CD8-positive, alpha-beta T cell (primary cell): ENCODE measurements at regions of chr18 and their contacts with region 1.

Region 1: DNA sequence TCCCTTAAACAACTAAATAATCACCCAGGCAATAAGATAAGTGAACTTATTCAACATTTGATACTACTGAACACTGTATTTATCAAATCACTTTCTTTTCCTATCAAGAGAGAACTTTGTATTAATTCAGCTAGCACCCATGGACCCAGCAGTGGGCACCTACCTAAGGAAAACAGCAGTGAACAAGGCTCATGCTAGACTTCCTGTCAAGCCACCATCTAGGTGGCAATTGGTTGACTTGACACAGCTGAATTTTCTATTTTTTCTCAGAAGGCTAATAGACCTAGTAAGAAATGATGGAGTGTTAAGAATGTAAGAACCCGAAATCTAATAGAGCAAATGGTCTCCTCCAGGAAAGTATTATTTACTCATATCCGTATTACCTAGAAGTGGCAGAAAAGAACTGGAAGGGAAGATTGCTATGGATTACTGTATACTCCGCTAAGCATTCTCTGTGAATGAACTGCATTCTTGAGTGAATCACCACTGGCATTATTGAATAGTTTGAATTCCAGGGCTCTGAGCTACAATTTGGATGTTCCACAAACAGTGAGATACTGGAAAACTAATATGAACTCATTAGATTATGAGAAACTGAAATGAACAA is 988.2 kb upstream of the CDH2 start:
- DNase-seq: no peak
- ATAC-seq: no peak
- H3K4me3 ChIP-seq: no peak overlapping the region
- H3K4me3 Mint-ChIP-seq: no peak overlapping the region
- H3K27ac ChIP-seq: no peak overlapping the region
- H3K27ac Mint-ChIP-seq: no peak overlapping the region
- H3K4me1 ChIP-seq: no peaks in the 10 kb centered on the region
- H3K4me1 Mint-ChIP-seq: no peaks in the 10 kb centered on the region
- H3K27me3 ChIP-seq: no peaks in the 10 kb centered on the region
- H3K27me3 Mint-ChIP-seq: no peaks in the 10 kb centered on the region
- CTCF ChIP-seq: no peak

Region 2: DNA sequence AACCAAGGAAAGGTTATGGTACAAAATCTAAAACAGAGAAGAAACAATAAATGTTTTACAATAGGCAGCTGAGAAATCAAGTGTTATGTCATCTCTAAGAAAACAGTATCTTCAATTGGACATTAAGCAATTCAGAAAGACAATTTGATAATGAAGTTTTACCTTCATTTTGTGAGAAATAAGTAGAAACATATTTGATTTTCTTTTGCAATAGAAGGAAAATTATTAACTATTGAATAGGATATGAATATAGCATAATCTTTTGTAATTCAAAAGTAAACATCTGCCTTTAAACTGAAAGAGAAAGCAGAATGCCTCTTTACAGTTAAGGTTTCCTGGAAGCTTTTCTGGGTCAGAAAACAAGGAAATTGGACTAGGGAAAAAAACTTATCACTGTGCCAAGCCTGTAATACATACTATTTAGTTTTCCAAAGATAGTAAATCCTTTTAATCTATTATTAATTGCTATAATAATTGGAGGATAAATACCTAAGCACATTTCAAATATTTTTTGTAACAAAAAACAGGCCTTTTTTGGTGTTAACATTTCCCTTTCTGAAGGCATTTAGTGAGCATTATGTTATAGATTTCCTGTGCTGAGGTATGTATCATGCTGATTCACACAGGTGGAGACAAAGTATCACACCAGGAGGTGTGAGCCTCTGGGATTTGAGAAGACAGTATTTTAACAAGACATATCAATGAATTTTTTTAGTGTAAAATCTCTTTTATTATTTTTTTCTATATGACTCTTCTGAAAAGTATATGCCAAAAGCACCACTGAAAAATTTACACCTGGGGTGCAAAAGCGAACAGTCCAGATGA is 41.2 kb before region 1 on chr18:
- CTCF ChIA-PET with region 1: no interaction called
- POLR2A ChIA-PET with region 1: no interaction called
- intact Hi-C with region 1: loop called in 1 of 2 experiments (anchors 5 kb)
- DNase-seq: no peak
- ATAC-seq: no peak
- H3K4me3 ChIP-seq: no peak overlapping the region
- H3K4me3 Mint-ChIP-seq: no peak overlapping the region
- H3K27ac ChIP-seq: no peak overlapping the region
- H3K27ac Mint-ChIP-seq: no peak overlapping the region
- H3K4me1 ChIP-seq: no peaks in the 10 kb centered on the region
- H3K4me1 Mint-ChIP-seq: no peaks in the 10 kb centered on the region
- H3K27me3 ChIP-seq: no peaks in the 10 kb centered on the region
- H3K27me3 Mint-ChIP-seq: no peaks in the 10 kb centered on the region
- CTCF ChIP-seq: no peak

Region 3: GRCh38 chr18:29137773-29138495 is 27.2 kb before region 1 on chr18:
- CTCF ChIA-PET with region 1: no interaction called
- POLR2A ChIA-PET with region 1: interaction called, 5 read pairs
- intact Hi-C with region 1: loop called in 1 of 2 experiments (anchors 2 kb)
- DNase-seq: no peak
- ATAC-seq: no peak
- H3K4me3 ChIP-seq: no peak overlapping the region
- H3K4me3 Mint-ChIP-seq: no peak overlapping the region
- H3K27ac ChIP-seq: no peak overlapping the region
- H3K27ac Mint-ChIP-seq: no peak overlapping the region
- H3K4me1 ChIP-seq: no peaks in the 10 kb centered on the region
- H3K4me1 Mint-ChIP-seq: no peaks in the 10 kb centered on the region
- H3K27me3 ChIP-seq: no peaks in the 10 kb centered on the region
- H3K27me3 Mint-ChIP-seq: no peaks in the 10 kb centered on the region
- CTCF ChIP-seq: no peak

Region 4: GRCh38 chr18:29191263-29191662 is 26.2 kb after region 1 on chr18:
- CTCF ChIA-PET with region 1: no interaction called
- POLR2A ChIA-PET with region 1: no interaction called
- intact Hi-C with region 1: no loop called
- DNase-seq: no peak
- ATAC-seq: no peak
- H3K4me3 ChIP-seq: no peak overlapping the region
- H3K4me3 Mint-ChIP-seq: no peak overlapping the region
- H3K27ac ChIP-seq: no peak overlapping the region
- H3K27ac Mint-ChIP-seq: no peak overlapping the region
- H3K4me1 ChIP-seq: no peaks in the 10 kb centered on the region
- H3K4me1 Mint-ChIP-seq: no peaks in the 10 kb centered on the region
- H3K27me3 ChIP-seq: no peaks in the 10 kb centered on the region
- H3K27me3 Mint-ChIP-seq: no peaks in the 10 kb centered on the region
- CTCF ChIP-seq: no peak